CD8-positive, alpha-beta memory T cell (primary cell): ENCODE measurements at regions of chr11 and their contacts with region 1.

Region 1: DNA sequence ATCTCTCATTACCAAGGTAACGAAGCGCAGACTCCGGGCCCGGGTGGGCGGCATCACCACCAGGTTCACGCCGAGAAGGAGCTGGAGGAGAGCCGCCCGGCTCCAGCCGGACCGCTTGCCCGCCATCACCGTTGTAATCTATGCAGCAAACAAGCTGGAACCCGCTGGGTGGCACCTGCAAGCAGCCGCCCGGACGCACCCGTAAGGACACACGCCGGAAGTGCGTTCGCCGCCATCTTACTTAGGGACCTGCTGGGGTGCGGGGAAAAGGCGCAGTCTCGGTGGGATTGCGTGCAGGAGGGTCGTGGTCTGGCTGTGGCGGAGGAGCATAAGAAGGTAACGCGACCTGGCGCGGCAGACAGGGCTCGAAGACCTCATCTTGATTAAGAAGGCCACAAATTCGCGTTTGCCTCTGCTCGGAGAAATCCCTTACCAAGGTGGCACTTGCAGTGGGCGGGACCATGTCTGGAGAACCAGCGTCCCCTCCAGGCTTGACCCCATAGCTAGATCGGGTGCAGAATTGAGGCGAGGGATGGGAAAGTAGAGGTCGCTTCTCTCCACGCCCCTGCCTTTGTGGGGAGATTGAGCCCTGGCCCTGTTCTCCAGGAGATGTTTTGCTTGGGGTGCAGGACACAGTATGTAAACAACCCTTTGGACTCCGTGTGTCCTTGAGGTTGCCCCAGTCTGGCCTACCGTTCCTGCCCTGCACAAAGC is at the start of gene ACP2:
- DNase-seq: peak; percentile 75 to 90 (median 84)
- H3K4me3 ChIP-seq: peak within 1 kb of the TSS; percentile 86
- H3K4me3 Mint-ChIP-seq: peak within 1 kb of the TSS; percentile 95 to 99 (median 96)
- H3K27ac ChIP-seq: peak within 1 kb of the TSS; percentile 85
- H3K27ac Mint-ChIP-seq: peak within 1 kb of the TSS; percentile 73 to 100 (median 98)
- H3K4me1 ChIP-seq: peaks cover 23% of the 10 kb centered on the region
- H3K4me1 Mint-ChIP-seq: peaks cover 23 to 34% (median 28%) of the 10 kb centered on the region in 3 donors
- H3K27me3 ChIP-seq: no peaks in the 10 kb centered on the region
- H3K27me3 Mint-ChIP-seq: no peaks in the 10 kb centered on the region
- total RNA-seq, gene ACP2: 24.1 to 24.5 TPM

Region 2: GRCh38 chr11:47207459-47207858 is 41.4 kb before region 1 on chr11:
- CTCF ChIA-PET with region 1: no interaction called
- POLR2A ChIA-PET with region 1: no interaction called
- DNase-seq: no peak
- H3K4me3 ChIP-seq: no peak overlapping the region
- H3K4me3 Mint-ChIP-seq: no peak overlapping the region
- H3K27ac ChIP-seq: no peak overlapping the region
- H3K27ac Mint-ChIP-seq: peak overlapping the region in 1 of 8 donors; percentile 58
- H3K4me1 ChIP-seq: no peaks in the 10 kb centered on the region
- H3K4me1 Mint-ChIP-seq: no peaks in the 10 kb centered on the region
- H3K27me3 ChIP-seq: no peaks in the 10 kb centered on the region
- H3K27me3 Mint-ChIP-seq: no peaks in the 10 kb centered on the region

Region 3: GRCh38 chr11:47233989-47234668 is 14.7 kb before region 1 on chr11:
- CTCF ChIA-PET with region 1: interaction called, 14 read pairs
- POLR2A ChIA-PET with region 1: interaction called, 3 read pairs
- DNase-seq: peak in 1 of 5 donors; percentile 37
- H3K4me3 ChIP-seq: peak overlapping the region; percentile 28
- H3K4me3 Mint-ChIP-seq: peak overlapping the region; percentile 24 to 83 (median 53)
- H3K27ac ChIP-seq: no peak overlapping the region
- H3K27ac Mint-ChIP-seq: peak overlapping the region; percentile 75 to 95 (median 91)
- H3K4me1 ChIP-seq: peaks cover 17% of the 10 kb centered on the region
- H3K4me1 Mint-ChIP-seq: peaks cover 14 to 25% (median 24%) of the 10 kb centered on the region in 3 donors
- H3K27me3 ChIP-seq: no peaks in the 10 kb centered on the region
- H3K27me3 Mint-ChIP-seq: no peaks in the 10 kb centered on the region